Calu3 (cell line): ENCODE measurements at regions of chr3 and their contacts with region 1.

Region 1: GRCh38 chr3:13233487-13234485 is 160.6 kb upstream of the IQSEC1 start:
- DNase-seq: no peak
- H3K4me3 Mint-ChIP-seq: no peak overlapping the region
- H3K27ac Mint-ChIP-seq: no peak overlapping the region
- H3K4me1 Mint-ChIP-seq: peaks cover 32% of the 10 kb centered on the region
- H3K27me3 Mint-ChIP-seq: peaks cover 30% of the 10 kb centered on the region
- CTCF ChIP-seq: no peak

Region 2: GRCh38 chr3:13145131-13145825 is 88.5 kb before region 1 on chr3:
- CTCF ChIA-PET with region 1: interaction called, 10 read pairs
- intact Hi-C with region 1: no loop called
- DNase-seq: peak; percentile 16
- H3K4me3 Mint-ChIP-seq: no peak overlapping the region
- H3K27ac Mint-ChIP-seq: no peak overlapping the region
- H3K4me1 Mint-ChIP-seq: no peaks in the 10 kb centered on the region
- H3K27me3 Mint-ChIP-seq: peaks cover 89% of the 10 kb centered on the region
- CTCF ChIP-seq: no peak

Region 3: DNA sequence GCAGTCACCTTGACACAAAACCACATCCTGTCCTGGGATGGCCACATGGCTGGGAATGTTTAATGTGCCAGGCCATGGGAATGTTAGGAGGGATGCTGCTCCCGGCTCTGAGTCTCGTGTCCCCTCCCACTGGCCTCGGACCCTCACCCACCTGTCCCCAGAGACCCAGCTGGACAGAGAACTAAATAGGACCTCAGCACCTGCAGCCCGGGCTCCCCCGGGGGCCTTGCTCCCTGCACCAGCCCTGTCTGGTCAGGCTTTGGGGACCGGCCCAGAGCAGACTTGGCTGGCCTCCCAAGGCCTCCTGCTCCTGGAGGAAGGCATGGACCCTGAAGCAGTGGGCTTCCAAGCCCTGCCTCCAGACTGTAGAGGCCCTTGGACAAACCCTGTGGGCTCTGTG is 60.6 kb before region 1 on chr3:
- CTCF ChIA-PET with region 1: no interaction called
- intact Hi-C with region 1: no loop called
- DNase-seq: no peak
- H3K4me3 Mint-ChIP-seq: no peak overlapping the region
- H3K27ac Mint-ChIP-seq: no peak overlapping the region
- H3K4me1 Mint-ChIP-seq: no peaks in the 10 kb centered on the region
- H3K27me3 Mint-ChIP-seq: peaks cover 93% of the 10 kb centered on the region
- CTCF ChIP-seq: no peak